ENCODE measurements at regions of chr4 and their contacts with region 1.

Region 1: GRCh38 chr4:39032218-39033085 is at the start of gene TMEM156:
- DNase-seq: peak; percentile 65
- H3K4me3 Mint-ChIP-seq: peak within 1 kb of the TSS; percentile 77
- H3K27ac Mint-ChIP-seq: peak within 1 kb of the TSS; percentile 89
- H3K4me1 Mint-ChIP-seq: peaks cover 57% of the 10 kb centered on the region
- H3K27me3 Mint-ChIP-seq: no peaks in the 10 kb centered on the region
- total RNA-seq, gene TMEM156: 10.2 to 11.3 TPM

Region 2: DNA sequence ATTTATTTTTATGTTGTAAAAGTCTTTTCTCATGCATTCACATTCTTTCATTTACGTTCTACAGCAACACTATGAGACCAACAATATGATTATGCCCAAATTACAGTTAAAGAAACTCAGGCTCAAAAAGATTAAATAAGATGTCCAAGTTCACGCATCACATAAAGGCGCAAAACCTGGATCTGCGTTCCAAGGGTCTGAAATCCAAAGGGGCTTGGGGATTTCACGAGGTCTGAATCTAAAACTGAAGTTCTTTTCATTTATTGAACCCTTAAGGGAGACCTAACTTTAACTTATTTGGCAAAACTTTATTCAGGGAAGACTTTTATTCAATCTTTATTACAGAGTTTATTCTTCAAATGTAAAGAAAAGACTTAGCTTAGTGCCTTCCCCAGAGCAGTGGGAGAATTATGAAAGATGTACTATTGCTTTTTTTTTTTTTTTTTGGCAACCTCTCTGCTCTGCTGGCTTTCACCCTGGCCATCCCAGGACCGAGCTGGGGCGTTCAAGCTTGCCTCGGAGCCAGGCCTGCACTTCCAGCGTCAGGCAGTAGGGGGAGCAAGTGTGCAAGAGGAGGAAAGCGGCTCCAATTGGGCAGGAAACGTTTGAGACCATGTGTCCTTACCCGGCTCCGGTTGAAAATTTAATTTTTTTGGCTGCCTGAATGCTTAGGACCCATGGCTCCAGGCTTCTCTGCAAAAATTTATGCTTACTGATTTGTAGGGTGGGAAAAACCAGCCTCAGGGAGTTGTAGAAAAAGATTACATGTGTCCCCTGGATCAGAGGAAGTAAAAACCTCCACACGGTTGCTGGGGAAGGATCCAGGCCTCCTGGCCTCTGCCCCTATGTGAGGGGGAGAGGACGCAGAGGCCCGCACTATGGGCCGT is 712.8 kb before region 1 on chr4:
- CTCF ChIA-PET with region 1: no interaction called
- intact Hi-C with region 1: loop called (anchors 10 kb)
- DNase-seq: peak; percentile 98
- H3K4me3 Mint-ChIP-seq: peak overlapping the region; percentile 76
- H3K27ac Mint-ChIP-seq: peak overlapping the region; percentile 89
- H3K4me1 Mint-ChIP-seq: peaks cover 46% of the 10 kb centered on the region
- H3K27me3 Mint-ChIP-seq: no peaks in the 10 kb centered on the region

Region 3: GRCh38 chr4:38856524-38857337 is 175.7 kb before region 1 on chr4 and contains the start of gene TLR6:
- CTCF ChIA-PET with region 1: interaction called, 3 read pairs
- intact Hi-C with region 1: loop called (anchors 2 kb)
- DNase-seq: peak; percentile 86
- H3K4me3 Mint-ChIP-seq: peak within 1 kb of the TSS; percentile 66
- H3K27ac Mint-ChIP-seq: peak within 1 kb of the TSS; percentile 84
- H3K4me1 Mint-ChIP-seq: peaks cover 35% of the 10 kb centered on the region
- H3K27me3 Mint-ChIP-seq: no peaks in the 10 kb centered on the region
- total RNA-seq, gene TLR6: 3.6 TPM

Region 4: GRCh38 chr4:38948551-38948950 is 83.9 kb before region 1 on chr4:
- CTCF ChIA-PET with region 1: interaction called, 3 read pairs
- intact Hi-C with region 1: loop called (anchors 1 kb)
- DNase-seq: no peak
- H3K4me3 Mint-ChIP-seq: no peak overlapping the region
- H3K27ac Mint-ChIP-seq: no peak overlapping the region
- H3K4me1 Mint-ChIP-seq: peaks cover 26% of the 10 kb centered on the region
- H3K27me3 Mint-ChIP-seq: no peaks in the 10 kb centered on the region

Region 5: DNA sequence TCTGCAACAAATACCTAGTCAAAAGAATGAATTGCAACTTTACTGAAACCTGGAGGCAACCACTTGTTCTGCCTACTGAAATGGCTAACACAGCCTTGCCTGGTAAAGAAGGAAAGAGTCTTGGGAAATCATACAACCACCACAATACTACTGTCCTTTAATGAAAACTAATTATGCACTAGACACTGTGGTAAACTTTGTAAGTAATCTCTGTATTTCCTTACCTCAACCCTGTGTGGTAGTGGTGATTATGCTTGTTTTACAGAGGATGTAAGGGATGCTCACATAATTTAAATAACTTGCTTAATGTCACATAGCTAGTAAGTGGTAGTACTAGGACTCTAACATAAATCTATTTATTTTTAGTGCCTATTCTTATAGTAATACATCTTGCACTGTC is 45.0 kb before region 1 on chr4:
- CTCF ChIA-PET with region 1: no interaction called
- intact Hi-C with region 1: loop called (anchors 1 kb)
- DNase-seq: no peak
- H3K4me3 Mint-ChIP-seq: no peak overlapping the region
- H3K27ac Mint-ChIP-seq: peak overlapping the region; percentile 69
- H3K4me1 Mint-ChIP-seq: peaks cover 54% of the 10 kb centered on the region
- H3K27me3 Mint-ChIP-seq: no peaks in the 10 kb centered on the region

Region 6: DNA sequence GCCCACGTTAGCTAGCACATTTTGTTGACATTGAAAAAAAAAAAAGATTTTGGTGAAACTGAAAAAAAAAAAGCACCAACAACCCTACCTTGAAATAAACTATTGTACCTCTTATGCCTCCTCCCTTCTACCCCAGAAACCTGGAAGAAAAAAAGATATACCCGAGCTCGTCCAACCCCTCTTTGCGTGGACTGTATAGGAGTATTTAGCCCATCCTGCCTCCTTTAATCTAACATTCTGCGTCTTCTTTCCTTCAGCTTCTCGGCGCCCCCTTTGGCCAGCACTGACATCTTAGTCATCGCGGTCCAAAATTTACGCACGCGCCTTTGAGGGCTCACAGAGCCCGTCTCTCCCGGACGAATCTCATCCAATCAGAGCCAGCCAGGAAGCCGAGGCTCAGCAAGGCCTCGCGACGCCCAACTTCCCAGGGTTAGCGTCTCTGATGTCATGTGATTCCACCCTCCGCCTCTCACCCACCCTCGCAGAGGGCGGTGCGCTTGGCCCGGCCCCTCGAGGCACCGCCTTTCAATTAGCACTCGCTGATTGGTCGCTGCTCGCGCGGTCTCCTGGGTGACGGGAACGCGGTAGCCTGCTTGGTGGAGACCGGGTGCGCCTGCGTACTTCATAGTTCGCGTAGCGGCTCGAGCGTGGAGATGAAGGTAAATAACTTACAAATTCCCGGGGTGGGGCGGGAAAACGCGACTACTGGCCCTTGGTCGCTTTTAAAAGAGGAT is 149.6 kb after region 1 on chr4 and contains the start of gene WDR19:
- CTCF ChIA-PET with region 1: no interaction called
- intact Hi-C with region 1: loop called (anchors 1 kb)
- DNase-seq: peak; percentile 99
- H3K4me3 Mint-ChIP-seq: no peak within 1 kb of the TSS
- H3K27ac Mint-ChIP-seq: no peak within 1 kb of the TSS
- H3K4me1 Mint-ChIP-seq: peaks cover 6% of the 10 kb centered on the region
- H3K27me3 Mint-ChIP-seq: no peaks in the 10 kb centered on the region
- total RNA-seq, gene WDR19: 12.9 to 18.9 TPM